ENCODE measurements at regions of chrX and their contacts with region 1.

Region 1: GRCh38 chrX:19630228-19630627 is 114.9 kb upstream of the MAP3K15 start:
- DNase-seq: no peak
- H3K4me3 ChIP-seq: no peak overlapping the region; the same call in 1 of the 2 replicates
- H3K4me3 Mint-ChIP-seq: peak overlapping the region; percentile 64
- H3K27ac Mint-ChIP-seq: peak overlapping the region; percentile 92
- H3K4me1 ChIP-seq: peaks cover 17% of the 10 kb centered on the region
- H3K4me1 Mint-ChIP-seq: peaks cover 22% of the 10 kb centered on the region
- H3K27me3 ChIP-seq: no peaks in the 10 kb centered on the region
- H3K27me3 Mint-ChIP-seq: no peaks in the 10 kb centered on the region
- CTCF ChIP-seq: no peak

Region 2: GRCh38 chrX:19566359-19567222 is 63.6 kb before region 1 on chrX:
- CTCF ChIA-PET with region 1: no interaction called
- POLR2A ChIA-PET with region 1: no interaction called
- intact Hi-C with region 1: loop called (anchors 1 kb)
- DNase-seq: peak in 1 of 2 experiments; percentile 47
- H3K4me3 ChIP-seq: no peak overlapping the region
- H3K4me3 Mint-ChIP-seq: no peak overlapping the region
- H3K27ac Mint-ChIP-seq: peak overlapping the region; percentile 90
- H3K4me1 ChIP-seq: peaks cover 18% of the 10 kb centered on the region; the same call in 1 of the 2 replicates
- H3K4me1 Mint-ChIP-seq: peaks cover 27% of the 10 kb centered on the region
- H3K27me3 ChIP-seq: no peaks in the 10 kb centered on the region
- H3K27me3 Mint-ChIP-seq: no peaks in the 10 kb centered on the region
- CTCF ChIP-seq: no peak

Region 3: GRCh38 chrX:19670854-19671620 is 40.8 kb after region 1 on chrX:
- CTCF ChIA-PET with region 1: no interaction called
- POLR2A ChIA-PET with region 1: no interaction called
- intact Hi-C with region 1: loop called (anchors 2 kb)
- DNase-seq: peak; percentile 30 to 60
- H3K4me3 ChIP-seq: no peak overlapping the region
- H3K4me3 Mint-ChIP-seq: peak overlapping the region; percentile 67
- H3K27ac Mint-ChIP-seq: peak overlapping the region; percentile 84
- H3K4me1 ChIP-seq: peaks cover 30% of the 10 kb centered on the region
- H3K4me1 Mint-ChIP-seq: peaks cover 25% of the 10 kb centered on the region
- H3K27me3 ChIP-seq: no peaks in the 10 kb centered on the region
- H3K27me3 Mint-ChIP-seq: no peaks in the 10 kb centered on the region
- CTCF ChIP-seq: no peak